ENCODE measurements at regions of chr9 and their contacts with region 1.

Region 1: DNA sequence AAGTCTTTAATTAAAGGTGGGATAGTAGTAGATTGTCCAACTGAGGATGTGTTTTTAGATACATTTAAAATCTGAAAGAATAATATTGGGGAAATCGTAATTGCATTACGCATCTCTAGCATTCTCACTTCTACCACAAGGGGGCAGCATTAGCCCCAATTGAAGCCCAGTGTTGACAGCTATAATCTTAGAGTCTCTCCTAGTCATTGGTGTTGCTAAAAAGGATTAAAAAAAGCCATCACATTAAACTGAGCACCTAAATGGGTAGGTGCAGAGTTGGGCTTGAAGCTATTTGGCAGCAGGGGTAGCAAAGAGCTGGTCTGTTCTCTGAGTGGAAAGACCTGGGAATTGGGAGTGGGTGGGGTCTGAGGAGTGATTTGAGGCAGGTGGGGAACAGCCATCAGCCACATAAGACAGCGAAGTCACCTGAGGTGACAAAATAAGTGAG is 177.2 kb downstream of the OSTF1 start:
- DNase-seq: peak in 1 of 2 donors; percentile 22
- ATAC-seq: peak in 6 of 8 donors; percentile 55 to 79 (median 66)
- H3K4me3 ChIP-seq: no peak overlapping the region
- H3K27ac ChIP-seq: no peak overlapping the region
- H3K4me1 ChIP-seq: no peaks in the 10 kb centered on the region
- H3K27me3 ChIP-seq: no peaks in the 10 kb centered on the region
- CTCF ChIP-seq: peak; percentile 81 to 93 (median 91)

Region 2: GRCh38 chr9:75601279-75601678 is 335.7 kb after region 1 on chr9:
- intact Hi-C with region 1: loop called in 1 of 10 experiments (anchors 10 kb)
- DNase-seq: no peak
- ATAC-seq: no peak
- H3K4me3 ChIP-seq: no peak overlapping the region
- H3K27ac ChIP-seq: no peak overlapping the region
- H3K4me1 ChIP-seq: peaks cover 0 to 6% (median 0%) of the 10 kb centered on the region in 9 donors
- H3K27me3 ChIP-seq: no peaks in the 10 kb centered on the region
- CTCF ChIP-seq: peak in 4 of 9 donors; percentile 19 to 43 (median 28)

Measured in heart right ventricle (tissue), 16 donors.